ENCODE measurements at regions of chr11 and their contacts with region 1.

Region 1: DNA sequence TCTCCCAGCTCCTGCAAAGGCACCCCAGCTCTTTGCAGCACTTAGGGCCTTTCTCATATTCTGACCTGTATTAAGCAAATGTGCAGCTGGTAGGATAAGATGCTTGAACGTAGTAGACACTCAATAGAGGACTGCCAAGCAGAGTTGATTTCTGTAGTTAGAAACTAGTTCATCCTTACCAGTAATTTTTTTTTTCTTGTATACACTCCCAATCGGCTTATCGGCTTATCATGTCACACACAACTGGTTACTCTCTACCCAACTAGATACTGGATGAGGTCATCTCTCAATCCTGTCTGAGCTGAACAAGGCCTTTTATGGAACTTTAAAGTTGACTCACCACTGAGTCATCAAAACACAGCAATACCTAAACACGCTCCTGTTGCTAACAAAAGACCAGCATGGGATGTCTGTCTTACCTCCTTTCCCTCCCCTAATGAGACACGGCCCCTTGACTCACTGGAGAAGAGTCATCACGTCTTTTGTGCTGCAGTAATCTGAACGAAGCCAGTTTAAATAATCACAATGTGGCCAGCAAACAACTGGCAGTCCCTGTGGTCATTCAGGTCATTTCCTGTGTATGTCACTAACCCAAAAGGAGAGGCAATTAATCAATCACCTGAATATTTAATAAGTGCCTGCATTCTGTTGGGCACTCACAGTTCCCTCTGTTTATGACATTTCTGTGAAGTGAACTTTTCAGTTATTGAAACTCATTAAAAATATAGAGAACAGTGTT is 7.5 kb upstream of the WEE1 start:
- DNase-seq: peak; percentile 100
- H3K4me3 ChIP-seq: peak overlapping the region in 1 of 3 experiments; percentile 12
- H3K27ac ChIP-seq: peak overlapping the region; percentile 100
- H3K4me1 ChIP-seq: peaks cover 53% of the 10 kb centered on the region
- H3K27me3 ChIP-seq: no peaks in the 10 kb centered on the region
- CTCF ChIP-seq: no peak

Region 2: GRCh38 chr11:8688414-8689362 is 877.3 kb before region 1 on chr11:
- CTCF ChIA-PET with region 1: no interaction called
- dilution Hi-C with region 1: no loop called
- in situ Hi-C with region 1: no loop called
- intact Hi-C with region 1: loop called (anchors 10 kb)
- DNase-seq: peak; percentile 95
- H3K4me3 ChIP-seq: peak overlapping the region; percentile 51 to 62 (median 52)
- H3K27ac ChIP-seq: peak overlapping the region; percentile 52
- H3K4me1 ChIP-seq: peaks cover 36% of the 10 kb centered on the region
- H3K27me3 ChIP-seq: no peaks in the 10 kb centered on the region
- CTCF ChIP-seq: peak in 1 of 2 donors; percentile 8

Region 3: GRCh38 chr11:9363954-9364912 is 201.8 kb before region 1 on chr11:
- CTCF ChIA-PET with region 1: no interaction called
- dilution Hi-C with region 1: no loop called
- in situ Hi-C with region 1: no loop called
- intact Hi-C with region 1: loop called (anchors 1 kb)
- DNase-seq: peak; percentile 95
- H3K4me3 ChIP-seq: peak overlapping the region in 2 of 3 experiments; percentile 30 to 47
- H3K27ac ChIP-seq: peak overlapping the region; percentile 96
- H3K4me1 ChIP-seq: peaks cover 35% of the 10 kb centered on the region
- H3K27me3 ChIP-seq: no peaks in the 10 kb centered on the region
- CTCF ChIP-seq: no peak

Region 4: DNA sequence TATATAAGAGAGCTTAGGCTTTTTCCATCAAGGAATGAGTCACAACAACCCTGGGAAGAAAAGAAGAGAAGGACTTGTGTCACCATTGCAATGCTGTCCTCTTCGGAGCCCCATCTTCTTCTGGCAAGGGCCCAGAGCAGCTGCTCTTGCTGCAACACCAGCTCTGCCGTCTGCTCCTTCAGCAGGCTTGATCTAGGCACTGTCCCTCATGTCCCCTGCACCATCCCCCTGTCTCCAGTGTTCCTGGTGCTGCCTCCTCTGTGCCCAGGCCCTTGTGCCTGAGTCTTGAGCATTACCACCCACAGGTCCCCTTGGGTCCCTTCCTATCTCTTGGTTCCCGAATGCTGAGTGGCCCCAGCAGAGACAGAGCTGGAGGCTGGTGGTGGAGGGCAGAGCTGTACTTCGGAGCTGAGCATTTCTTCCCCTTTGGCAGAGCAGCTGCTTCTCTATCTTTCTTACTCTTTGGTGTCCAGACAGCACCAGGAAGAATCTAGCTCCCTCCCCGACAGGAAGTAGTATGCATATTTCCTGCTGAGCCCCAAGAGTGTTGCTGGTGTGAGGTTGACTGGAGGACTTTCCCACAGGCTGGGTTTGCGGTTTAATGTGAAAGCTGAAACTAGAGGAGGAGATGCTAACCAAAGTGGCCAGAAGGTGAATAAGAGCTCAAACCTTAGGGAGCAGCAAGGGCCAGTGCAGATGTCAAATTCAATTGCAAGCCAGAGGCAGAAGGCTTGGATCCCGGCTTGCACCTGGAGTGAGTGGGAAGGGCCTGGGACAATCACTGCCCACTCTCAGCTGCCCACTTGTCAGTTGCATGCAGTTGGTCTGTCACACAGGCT is 35.3 kb after region 1 on chr11:
- CTCF ChIA-PET with region 1: no interaction called
- dilution Hi-C with region 1: no loop called
- in situ Hi-C with region 1: no loop called
- intact Hi-C with region 1: loop called (anchors 2 kb)
- DNase-seq: peak; percentile 42
- H3K4me3 ChIP-seq: no peak overlapping the region
- H3K27ac ChIP-seq: peak overlapping the region; percentile 80
- H3K4me1 ChIP-seq: peaks cover 18% of the 10 kb centered on the region
- H3K27me3 ChIP-seq: no peaks in the 10 kb centered on the region
- CTCF ChIP-seq: no peak

Region 5: DNA sequence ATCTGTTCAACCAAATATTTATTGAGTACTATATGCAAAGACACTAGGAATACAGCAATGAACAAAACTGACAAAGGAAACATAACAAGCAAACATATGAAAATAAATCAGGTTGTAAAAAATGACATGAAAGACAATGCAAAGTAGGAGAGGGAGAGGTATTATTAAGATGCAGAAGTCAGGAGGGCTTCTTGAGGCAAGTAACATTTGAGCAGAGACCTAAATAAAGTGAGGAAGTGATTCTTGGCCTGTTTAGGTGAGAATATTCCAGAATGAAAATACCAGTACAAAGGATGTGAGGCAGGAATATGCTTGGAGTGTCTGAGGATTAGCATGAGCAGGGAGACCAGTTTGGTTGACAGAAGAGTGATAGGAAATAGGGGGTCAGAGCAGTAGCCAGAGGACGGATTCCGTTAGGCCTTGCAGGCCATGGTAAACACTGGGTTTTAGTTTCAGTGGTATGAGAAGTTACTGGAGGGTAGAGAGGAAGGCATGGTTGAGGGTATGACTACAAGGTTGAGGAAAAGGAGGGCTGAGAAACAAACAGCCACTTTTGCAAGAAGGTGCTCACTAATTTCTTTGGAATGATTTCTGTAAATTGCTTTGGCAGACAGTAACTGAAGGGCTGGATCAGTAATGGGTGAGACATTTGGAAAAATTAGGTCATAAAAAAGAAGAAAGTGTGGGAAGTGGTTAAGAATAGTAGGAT is 289.7 kb after region 1 on chr11:
- CTCF ChIA-PET with region 1: no interaction called
- dilution Hi-C with region 1: no loop called
- in situ Hi-C with region 1: no loop called
- intact Hi-C with region 1: no loop called
- DNase-seq: no peak
- H3K4me3 ChIP-seq: no peak overlapping the region
- H3K27ac ChIP-seq: no peak overlapping the region
- H3K4me1 ChIP-seq: no peaks in the 10 kb centered on the region
- H3K27me3 ChIP-seq: no peaks in the 10 kb centered on the region
- CTCF ChIP-seq: no peak

Region 6: GRCh38 chr11:10592331-10592730 is 1026.3 kb after region 1 on chr11:
- CTCF ChIA-PET with region 1: no interaction called
- dilution Hi-C with region 1: no loop called
- in situ Hi-C with region 1: no loop called
- intact Hi-C with region 1: loop called (anchors 5 kb)
- DNase-seq: peak; percentile 91
- H3K4me3 ChIP-seq: no peak overlapping the region
- H3K27ac ChIP-seq: peak overlapping the region; percentile 97
- H3K4me1 ChIP-seq: peaks cover 45% of the 10 kb centered on the region
- H3K27me3 ChIP-seq: no peaks in the 10 kb centered on the region
- CTCF ChIP-seq: no peak

Region 7: GRCh38 chr11:10735481-10736475 is 1169.8 kb after region 1 on chr11:
- CTCF ChIA-PET with region 1: no interaction called
- dilution Hi-C with region 1: no loop called
- in situ Hi-C with region 1: no loop called
- intact Hi-C with region 1: no loop called
- DNase-seq: peak; percentile 89
- H3K4me3 ChIP-seq: peak overlapping the region; percentile 23 to 44 (median 34)
- H3K27ac ChIP-seq: peak overlapping the region; percentile 78
- H3K4me1 ChIP-seq: peaks cover 11% of the 10 kb centered on the region
- H3K27me3 ChIP-seq: no peaks in the 10 kb centered on the region
- CTCF ChIP-seq: peak; percentile 84 to 98